Naive thymus-derived CD4-positive, alpha-beta T cell (primary cell): ENCODE measurements at regions of chr16 and their contacts with region 1.

Region 1: DNA sequence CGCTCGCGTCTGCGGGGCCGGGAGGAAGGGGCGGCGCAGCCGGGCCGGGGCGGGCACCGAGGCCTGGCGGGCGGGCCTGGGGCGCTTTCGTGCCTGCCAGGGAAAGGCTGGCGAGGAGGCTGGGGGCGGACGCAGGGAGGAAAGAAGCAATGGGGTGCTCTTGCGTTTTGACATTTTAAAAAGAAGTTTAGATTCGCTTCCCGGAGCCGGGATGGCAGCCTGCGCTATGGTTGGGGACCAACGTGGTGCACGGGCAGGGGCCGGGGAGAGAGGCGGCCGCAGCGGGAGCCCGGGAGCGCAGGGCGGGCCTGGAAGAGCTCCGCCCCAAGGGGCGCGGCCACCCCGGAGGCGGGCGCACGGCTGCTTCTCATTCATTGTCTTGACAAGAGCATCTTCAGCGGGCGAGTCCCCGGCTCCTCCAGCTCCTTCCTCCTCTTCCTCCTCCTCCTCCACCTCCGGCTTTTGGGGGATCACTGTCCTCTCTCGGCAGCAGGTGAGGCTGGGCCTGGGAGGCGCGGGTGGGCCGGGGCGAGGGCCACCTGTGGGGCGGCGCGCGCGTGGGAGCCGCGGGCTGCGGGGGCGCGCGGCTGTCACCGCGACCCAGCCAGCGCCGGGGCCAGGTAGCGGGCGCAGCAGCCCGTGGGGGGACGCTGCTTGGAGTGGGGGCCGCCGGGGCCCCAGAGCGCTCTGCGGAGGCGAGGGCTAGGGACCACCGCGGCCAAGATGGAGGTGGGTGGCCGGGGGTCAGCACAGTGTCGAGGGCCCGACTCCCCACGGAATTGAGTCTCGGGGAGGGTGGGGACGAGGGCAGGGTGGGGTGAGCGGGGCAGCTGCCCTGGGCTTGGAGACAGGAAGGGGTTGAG is at the start of gene CORO1A:
- DNase-seq: peak; percentile 71 to 89 (median 85)
- ATAC-seq: peak; percentile 72
- H3K4me3 ChIP-seq: peak within 1 kb of the TSS; percentile 100
- H3K4me3 Mint-ChIP-seq: peak within 1 kb of the TSS; percentile 96 to 99 (median 98)
- H3K27ac ChIP-seq: peak within 1 kb of the TSS; percentile 85
- H3K27ac Mint-ChIP-seq: peak within 1 kb of the TSS; percentile 91 to 97 (median 96)
- H3K4me1 ChIP-seq: peaks cover 28 to 36% of the 10 kb centered on the region in 2 donors
- H3K4me1 Mint-ChIP-seq: peaks cover 19 to 36% (median 28%) of the 10 kb centered on the region in 7 donors
- H3K27me3 ChIP-seq: no peaks in the 10 kb centered on the region
- H3K27me3 Mint-ChIP-seq: no peaks in the 10 kb centered on the region
- total RNA-seq, gene CORO1A: 609 to 1,666 (median 826) TPM

Region 2: GRCh38 chr16:29915590-29916247 is 267.7 kb before region 1 on chr16:
- CTCF ChIA-PET with region 1: no interaction called
- POLR2A ChIA-PET with region 1: no interaction called
- intact Hi-C with region 1: no loop called
- DNase-seq: no peak
- ATAC-seq: no peak
- H3K4me3 ChIP-seq: no peak overlapping the region
- H3K4me3 Mint-ChIP-seq: no peak overlapping the region
- H3K27ac ChIP-seq: no peak overlapping the region
- H3K27ac Mint-ChIP-seq: peak overlapping the region in 1 of 9 donors; percentile 33
- H3K4me1 ChIP-seq: no peaks in the 10 kb centered on the region
- H3K4me1 Mint-ChIP-seq: peaks cover 6 to 10% (median 9%) of the 10 kb centered on the region in 7 donors
- H3K27me3 ChIP-seq: no peaks in the 10 kb centered on the region
- H3K27me3 Mint-ChIP-seq: no peaks in the 10 kb centered on the region

Region 3: DNA sequence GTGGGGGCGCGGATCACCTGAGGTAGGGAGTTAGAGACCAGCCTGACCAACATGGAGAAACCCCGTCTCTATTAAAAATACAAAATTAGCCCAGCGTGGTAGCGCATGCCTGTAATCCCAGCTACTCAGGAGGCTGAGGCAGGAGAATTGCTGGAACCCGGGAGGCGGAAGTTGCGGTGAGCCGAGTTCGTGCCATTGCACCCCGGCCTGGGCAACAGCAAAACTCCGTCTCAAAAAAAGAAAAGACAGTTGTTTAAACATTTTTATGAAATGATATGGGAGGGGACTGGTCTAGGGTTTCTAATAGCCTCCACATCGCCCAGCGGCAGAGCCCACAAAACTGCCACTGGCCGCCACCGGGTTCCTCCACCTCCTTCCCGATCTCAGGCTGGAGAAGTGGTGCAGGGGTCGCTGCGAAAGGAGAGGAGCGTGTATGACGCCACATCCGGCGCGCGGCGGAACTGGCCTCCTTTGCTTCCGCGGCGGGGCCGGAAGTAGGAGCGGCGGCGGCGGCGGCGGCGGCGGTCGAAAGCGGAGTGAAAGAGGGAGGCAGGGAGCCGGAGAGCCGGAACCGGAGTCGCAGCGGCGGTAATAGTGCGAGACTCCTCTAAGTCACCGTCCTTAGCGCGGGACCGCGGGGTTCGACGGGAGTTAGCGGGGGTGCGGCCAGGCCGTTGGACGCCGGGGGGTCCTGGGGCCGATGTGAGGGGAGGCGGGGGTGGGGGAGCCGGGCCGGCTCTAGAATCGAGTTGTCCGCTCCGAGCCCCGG is 107.8 kb before region 1 on chr16 and contains the start of gene PPP4C:
- CTCF ChIA-PET with region 1: interaction called, 4 read pairs
- POLR2A ChIA-PET with region 1: interaction called, 31 read pairs
- intact Hi-C with region 1: no loop called
- DNase-seq: peak; percentile 82 to 92 (median 89)
- ATAC-seq: peak; percentile 94
- H3K4me3 ChIP-seq: peak within 1 kb of the TSS; percentile 75
- H3K4me3 Mint-ChIP-seq: peak within 1 kb of the TSS; percentile 90 to 99 (median 95)
- H3K27ac ChIP-seq: peak within 1 kb of the TSS; percentile 85
- H3K27ac Mint-ChIP-seq: peak within 1 kb of the TSS; percentile 92 to 98 (median 96)
- H3K4me1 ChIP-seq: peaks cover 20 to 21% of the 10 kb centered on the region in 2 donors
- H3K4me1 Mint-ChIP-seq: peaks cover 23 to 59% (median 41%) of the 10 kb centered on the region in 7 donors
- H3K27me3 ChIP-seq: no peaks in the 10 kb centered on the region
- H3K27me3 Mint-ChIP-seq: peaks cover 0 to 2% (median 0%) of the 10 kb centered on the region in 5 donors
- total RNA-seq, gene PPP4C: 68.4 to 143 (median 86.0) TPM

Region 4: GRCh38 chr16:30112197-30113030 is 71.0 kb before region 1 on chr16:
- CTCF ChIA-PET with region 1: interaction called, 4 read pairs
- POLR2A ChIA-PET with region 1: interaction called, 116 read pairs
- intact Hi-C with region 1: no loop called
- DNase-seq: peak in 7 of 9 donors; percentile 31 to 76 (median 35)
- ATAC-seq: peak; percentile 60
- H3K4me3 ChIP-seq: no peak overlapping the region
- H3K4me3 Mint-ChIP-seq: no peak overlapping the region
- H3K27ac ChIP-seq: no peak overlapping the region
- H3K27ac Mint-ChIP-seq: peak overlapping the region in 2 of 9 donors; percentile 12 to 38
- H3K4me1 ChIP-seq: no peaks in the 10 kb centered on the region
- H3K4me1 Mint-ChIP-seq: peaks cover 6 to 15% (median 11%) of the 10 kb centered on the region in 7 donors
- H3K27me3 ChIP-seq: no peaks in the 10 kb centered on the region
- H3K27me3 Mint-ChIP-seq: no peaks in the 10 kb centered on the region

Region 5: DNA sequence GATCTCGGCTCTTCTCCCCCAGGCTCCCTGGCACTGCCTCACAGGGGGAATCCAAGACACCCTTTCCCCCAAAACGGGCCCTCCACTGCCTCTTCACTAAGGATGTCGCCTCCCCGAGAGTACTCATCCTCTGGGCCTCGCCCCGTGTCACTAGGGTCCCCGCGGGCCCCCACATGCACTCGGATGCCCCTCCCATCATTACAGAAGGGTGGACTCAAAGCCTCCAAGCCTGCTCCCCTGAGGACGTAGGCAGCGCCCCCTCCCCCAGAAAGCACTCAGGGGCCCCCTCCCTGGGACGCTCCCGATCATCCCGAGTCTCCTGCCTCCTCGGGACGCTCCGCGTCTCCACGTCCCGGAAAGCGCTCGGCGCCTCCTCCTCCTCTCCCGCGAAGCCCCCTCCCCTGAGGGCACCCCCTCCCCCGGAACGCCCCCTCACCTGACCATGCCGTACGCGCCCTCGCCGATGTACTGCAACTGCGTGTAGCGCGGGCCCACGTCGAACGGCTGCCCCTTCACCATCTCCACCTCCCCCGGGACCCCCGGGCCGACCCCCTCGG is 60.8 kb before region 1 on chr16:
- CTCF ChIA-PET with region 1: interaction called, 4 read pairs
- POLR2A ChIA-PET with region 1: interaction called, 116 read pairs
- intact Hi-C with region 1: loop called in 1 of 2 experiments (anchors 1 kb)
- DNase-seq: peak in 2 of 9 donors; percentile 19 to 35
- ATAC-seq: peak; percentile 2
- H3K4me3 ChIP-seq: peak overlapping the region; percentile 68
- H3K4me3 Mint-ChIP-seq: peak overlapping the region; percentile 82 to 94 (median 88)
- H3K27ac ChIP-seq: peak overlapping the region; percentile 89
- H3K27ac Mint-ChIP-seq: peak overlapping the region; percentile 75 to 93 (median 85)
- H3K4me1 ChIP-seq: peaks cover 6 to 13% of the 10 kb centered on the region in 2 donors
- H3K4me1 Mint-ChIP-seq: peaks cover 20 to 39% (median 27%) of the 10 kb centered on the region in 7 donors
- H3K27me3 ChIP-seq: no peaks in the 10 kb centered on the region
- H3K27me3 Mint-ChIP-seq: no peaks in the 10 kb centered on the region

Region 6: GRCh38 chr16:30142672-30143346 is 40.7 kb before region 1 on chr16:
- CTCF ChIA-PET with region 1: interaction called, 4 read pairs
- POLR2A ChIA-PET with region 1: interaction called, 23 read pairs
- intact Hi-C with region 1: loop called in 1 of 2 experiments (anchors 1 kb)
- DNase-seq: peak in 3 of 9 donors; percentile 17 to 38 (median 30)
- ATAC-seq: peak; percentile 74
- H3K4me3 ChIP-seq: no peak overlapping the region
- H3K4me3 Mint-ChIP-seq: no peak overlapping the region
- H3K27ac ChIP-seq: no peak overlapping the region
- H3K27ac Mint-ChIP-seq: peak overlapping the region; percentile 2 to 79 (median 32)
- H3K4me1 ChIP-seq: peaks cover 0 to 23% of the 10 kb centered on the region in 2 donors
- H3K4me1 Mint-ChIP-seq: peaks cover 21 to 33% (median 24%) of the 10 kb centered on the region in 7 donors
- H3K27me3 ChIP-seq: no peaks in the 10 kb centered on the region
- H3K27me3 Mint-ChIP-seq: no peaks in the 10 kb centered on the region

Region 7: GRCh38 chr16:30166202-30166902 is 17.1 kb before region 1 on chr16:
- CTCF ChIA-PET with region 1: no interaction called
- POLR2A ChIA-PET with region 1: interaction called, 16 read pairs
- intact Hi-C with region 1: no loop called
- DNase-seq: peak in 1 of 9 donors; percentile 30
- ATAC-seq: peak; percentile 86
- H3K4me3 ChIP-seq: no peak overlapping the region
- H3K4me3 Mint-ChIP-seq: peak overlapping the region; percentile 43 to 84 (median 57)
- H3K27ac ChIP-seq: no peak overlapping the region
- H3K27ac Mint-ChIP-seq: peak overlapping the region in 8 of 9 donors; percentile 65 to 87 (median 76)
- H3K4me1 ChIP-seq: no peaks in the 10 kb centered on the region
- H3K4me1 Mint-ChIP-seq: peaks cover 20 to 45% (median 37%) of the 10 kb centered on the region in 7 donors
- H3K27me3 ChIP-seq: no peaks in the 10 kb centered on the region
- H3K27me3 Mint-ChIP-seq: no peaks in the 10 kb centered on the region

Region 8: GRCh38 chr16:30378236-30379204 is 195.1 kb after region 1 on chr16:
- CTCF ChIA-PET with region 1: no interaction called
- POLR2A ChIA-PET with region 1: interaction called, 19 read pairs
- intact Hi-C with region 1: no loop called
- DNase-seq: peak; percentile 97 to 99 (median 99)
- ATAC-seq: peak; percentile 91
- H3K4me3 ChIP-seq: peak overlapping the region; percentile 88
- H3K4me3 Mint-ChIP-seq: peak overlapping the region; percentile 90 to 100 (median 97)
- H3K27ac ChIP-seq: peak overlapping the region; percentile 100
- H3K27ac Mint-ChIP-seq: peak overlapping the region; percentile 98 to 100 (median 100)
- H3K4me1 ChIP-seq: peaks cover 54 to 56% of the 10 kb centered on the region in 2 donors
- H3K4me1 Mint-ChIP-seq: peaks cover 32 to 61% (median 49%) of the 10 kb centered on the region in 7 donors
- H3K27me3 ChIP-seq: no peaks in the 10 kb centered on the region
- H3K27me3 Mint-ChIP-seq: no peaks in the 10 kb centered on the region